Activated T-helper 2 cell treated with anti-CD3 and anti-CD28 coated beads, Interferon-gamma antibody, Interleukin-2, Interleukin-4, amounts not matched to agents 10 μg/mL and 5 μg/mL and 100 μg/mL, durations not matched to agents 14 hours and 24 hours and 36 hours (primary cell): ENCODE measurements at regions of chr3 and their contacts with region 1.

Region 1: DNA sequence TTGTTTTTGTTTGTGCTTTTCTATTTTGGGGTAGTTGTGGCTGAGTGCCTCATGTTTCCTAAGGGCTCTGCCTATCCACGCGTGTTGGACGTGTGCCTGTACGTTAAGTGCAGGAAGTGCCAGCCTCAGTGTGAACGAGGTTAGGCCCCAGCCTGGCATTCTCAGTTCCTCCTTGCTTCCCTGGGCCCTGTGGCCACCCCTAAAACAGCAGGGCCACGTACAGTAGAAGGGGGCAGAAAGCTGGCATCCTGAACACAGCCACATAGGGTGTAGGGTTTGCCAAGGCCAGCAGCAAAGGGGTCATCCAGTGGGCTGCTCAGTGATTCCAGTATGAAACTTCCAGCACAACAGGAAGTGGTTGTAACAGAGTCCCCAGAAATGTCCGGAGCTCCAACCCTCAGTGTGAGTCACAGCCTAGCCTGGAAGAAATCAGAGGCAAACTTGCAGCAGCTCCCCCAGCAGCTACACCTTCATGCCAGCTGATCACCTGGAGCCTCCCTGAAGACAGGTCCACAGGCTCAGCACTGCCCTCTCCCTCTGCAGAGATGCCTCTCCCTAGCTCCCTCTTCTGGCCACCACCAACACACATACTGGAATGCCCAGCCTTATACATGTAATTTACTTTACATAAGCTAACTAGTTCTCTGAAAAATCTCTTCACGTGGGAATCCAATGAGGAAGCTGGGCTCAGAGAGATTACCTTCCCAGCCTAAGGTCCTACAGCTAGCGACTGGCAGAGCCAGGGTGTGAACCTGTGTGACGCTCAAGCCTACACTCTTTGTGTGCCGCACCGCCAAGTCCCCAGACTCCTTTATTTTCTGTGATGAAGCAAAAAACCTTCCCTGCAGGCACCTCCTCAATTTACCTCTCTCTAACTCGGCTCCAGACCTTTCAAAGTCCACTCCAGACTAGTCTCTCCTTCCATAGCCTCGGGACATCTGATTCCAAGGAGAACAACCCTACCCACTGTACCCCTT is 26.6 kb downstream of the ILDR1 start:
- DNase-seq: no peak
- H3K4me3 Mint-ChIP-seq: no peak overlapping the region
- H3K27ac Mint-ChIP-seq: no peak overlapping the region
- H3K4me1 Mint-ChIP-seq: peaks cover 39% of the 10 kb centered on the region
- H3K27me3 Mint-ChIP-seq: no peaks in the 10 kb centered on the region

Region 2: DNA sequence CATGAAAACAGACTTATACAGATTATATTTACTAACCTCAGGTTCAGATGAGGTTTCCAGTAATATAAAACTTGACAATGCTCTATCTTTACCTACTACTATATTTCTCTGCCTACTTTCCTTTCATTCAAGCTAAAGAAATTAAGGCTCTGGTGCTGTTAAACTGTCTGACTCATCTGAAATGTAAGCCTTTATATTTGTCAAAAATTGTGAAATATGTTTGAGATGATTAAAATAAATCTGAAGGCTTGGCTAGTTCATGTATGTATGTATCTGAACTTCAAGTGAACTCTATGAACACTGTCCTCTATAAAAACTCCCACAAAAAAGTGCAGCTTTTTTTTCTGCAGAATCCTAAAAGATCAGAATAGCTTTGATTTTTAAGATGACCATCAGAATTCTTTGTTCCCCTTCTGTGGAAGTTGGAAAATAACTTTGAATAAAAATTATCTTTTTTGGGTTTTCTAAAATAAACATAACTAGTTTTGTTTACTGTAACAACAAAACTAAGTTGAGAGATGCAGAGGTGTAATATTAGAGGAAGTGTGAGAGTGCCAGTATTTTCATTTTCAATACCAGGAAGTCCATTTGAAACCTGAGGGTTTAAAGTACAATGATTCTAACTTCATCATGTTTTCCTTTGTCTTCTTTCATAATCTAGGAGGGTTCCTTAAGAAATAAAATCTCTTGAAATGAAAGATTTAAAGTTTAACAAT is 15.6 kb before region 1 on chr3:
- intact Hi-C with region 1: loop called (anchors 1 kb)
- DNase-seq: no peak
- H3K4me3 Mint-ChIP-seq: no peak overlapping the region
- H3K27ac Mint-ChIP-seq: no peak overlapping the region
- H3K4me1 Mint-ChIP-seq: peaks cover 23% of the 10 kb centered on the region
- H3K27me3 Mint-ChIP-seq: no peaks in the 10 kb centered on the region

Region 3: GRCh38 chr3:122092460-122093165 is 97.2 kb after region 1 on chr3:
- intact Hi-C with region 1: loop called (anchors 5 kb)
- DNase-seq: peak; percentile 62
- H3K4me3 Mint-ChIP-seq: peak overlapping the region; percentile 3
- H3K27ac Mint-ChIP-seq: peak overlapping the region; percentile 85
- H3K4me1 Mint-ChIP-seq: peaks cover 57% of the 10 kb centered on the region
- H3K27me3 Mint-ChIP-seq: no peaks in the 10 kb centered on the region